Cardiac septum (tissue), 1 donor: ENCODE measurements at regions of chr13 and their contacts with region 1.

Region 1: DNA sequence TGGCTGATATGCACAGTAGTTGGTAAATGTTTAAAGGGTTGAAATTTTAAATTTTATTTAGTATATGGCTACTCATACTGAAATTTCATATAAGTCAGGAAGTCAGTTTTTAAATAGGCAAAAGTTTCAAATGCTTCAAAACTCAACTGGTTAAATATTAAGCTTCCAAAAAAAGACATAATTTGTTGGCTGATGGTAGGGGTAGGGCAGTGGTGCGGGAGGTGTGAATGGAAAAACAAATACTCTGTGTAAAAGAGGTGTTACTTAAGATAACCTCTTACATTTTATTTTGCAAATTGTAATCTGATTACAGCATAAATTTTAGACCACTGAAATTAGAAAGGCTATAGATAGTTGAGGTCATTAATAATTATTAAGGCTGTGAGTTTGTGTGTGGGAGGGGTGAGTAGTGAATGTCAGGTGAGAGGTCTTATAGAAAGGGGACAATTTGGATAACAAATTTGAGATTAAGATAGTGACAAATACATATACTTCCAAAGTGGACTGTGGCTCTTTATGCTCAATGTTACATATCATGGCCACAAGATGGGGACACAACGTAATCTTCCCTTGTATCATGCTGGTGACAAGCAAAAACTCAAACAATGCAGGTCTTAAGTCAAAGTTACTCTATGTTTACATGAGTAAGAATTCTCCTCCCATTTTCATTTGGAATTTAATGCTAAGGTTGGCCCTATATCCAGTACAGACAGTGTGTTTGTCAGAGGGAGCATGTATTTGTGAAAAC is 36.6 kb upstream of the OXGR1 start:
- DNase-seq: no peak

Region 2: GRCh38 chr13:97212601-97213040 is 181.7 kb after region 1 on chr13:
- intact Hi-C with region 1: loop called (anchors 10 kb)
- DNase-seq: no peak

Region 3: DNA sequence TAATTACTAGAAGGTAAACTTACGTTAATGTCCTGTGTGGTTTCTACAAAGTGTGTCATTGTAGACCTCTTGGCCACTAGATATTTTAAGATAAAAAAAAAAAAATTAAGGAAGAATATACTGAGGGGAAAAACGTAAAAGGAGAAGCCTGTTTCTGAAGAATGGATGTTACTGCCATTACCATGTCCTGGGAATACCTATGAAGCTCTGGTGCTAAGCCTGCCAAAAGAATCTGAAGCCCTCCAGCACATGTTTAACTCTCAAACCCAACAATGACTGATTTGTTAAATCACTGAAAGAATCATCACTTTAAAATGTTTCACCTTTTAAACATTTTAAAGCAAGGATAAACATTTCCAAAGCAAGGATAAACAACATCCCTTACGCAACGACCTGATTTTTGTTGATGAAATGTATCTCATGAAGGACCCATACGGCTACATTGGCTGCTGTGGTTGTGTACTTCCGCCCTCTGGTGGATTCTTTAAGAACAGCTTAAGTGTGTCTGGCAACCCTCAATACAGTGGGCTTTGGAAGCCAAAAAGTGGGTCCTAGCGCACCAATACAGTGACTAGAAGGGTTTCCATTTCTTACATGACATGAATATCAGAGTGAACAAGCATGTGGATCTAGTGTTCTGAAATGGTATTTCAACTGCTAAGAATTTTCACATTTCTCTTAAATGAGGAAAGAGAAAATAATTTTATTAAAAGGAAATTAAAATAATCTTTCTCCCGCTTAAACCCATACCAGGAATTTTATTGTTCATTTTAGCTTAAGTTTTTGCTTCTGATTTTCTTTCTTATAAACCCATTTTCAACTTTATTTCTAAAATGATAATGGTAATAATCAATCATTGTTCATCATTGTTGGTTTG is 328.5 kb after region 1 on chr13:
- intact Hi-C with region 1: loop called (anchors 10 kb)
- DNase-seq: no peak

Region 4: DNA sequence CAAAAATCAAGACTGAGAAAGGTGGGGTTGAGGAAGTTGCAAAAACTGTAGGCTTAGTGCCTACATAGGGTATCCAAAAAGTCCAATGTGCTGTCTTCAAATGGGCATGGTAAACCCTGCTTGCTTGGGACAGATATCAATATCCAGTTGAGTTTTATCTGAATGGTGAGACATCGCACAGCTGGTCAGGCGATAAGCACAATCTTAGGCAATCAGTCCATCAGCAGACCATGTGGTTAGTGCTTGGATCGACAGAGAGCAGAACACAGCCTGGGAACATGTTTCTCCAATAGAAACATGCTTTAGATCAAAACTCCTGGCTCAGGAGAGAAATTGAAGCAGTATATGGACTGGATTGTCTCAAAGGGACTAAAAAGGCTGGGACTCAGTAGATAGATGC is 771.3 kb after region 1 on chr13:
- intact Hi-C with region 1: loop called (anchors 5 kb)
- DNase-seq: no peak